Mammary epithelial cell (primary cell): ENCODE measurements at regions of chr19 and their contacts with region 1.

Region 1: DNA sequence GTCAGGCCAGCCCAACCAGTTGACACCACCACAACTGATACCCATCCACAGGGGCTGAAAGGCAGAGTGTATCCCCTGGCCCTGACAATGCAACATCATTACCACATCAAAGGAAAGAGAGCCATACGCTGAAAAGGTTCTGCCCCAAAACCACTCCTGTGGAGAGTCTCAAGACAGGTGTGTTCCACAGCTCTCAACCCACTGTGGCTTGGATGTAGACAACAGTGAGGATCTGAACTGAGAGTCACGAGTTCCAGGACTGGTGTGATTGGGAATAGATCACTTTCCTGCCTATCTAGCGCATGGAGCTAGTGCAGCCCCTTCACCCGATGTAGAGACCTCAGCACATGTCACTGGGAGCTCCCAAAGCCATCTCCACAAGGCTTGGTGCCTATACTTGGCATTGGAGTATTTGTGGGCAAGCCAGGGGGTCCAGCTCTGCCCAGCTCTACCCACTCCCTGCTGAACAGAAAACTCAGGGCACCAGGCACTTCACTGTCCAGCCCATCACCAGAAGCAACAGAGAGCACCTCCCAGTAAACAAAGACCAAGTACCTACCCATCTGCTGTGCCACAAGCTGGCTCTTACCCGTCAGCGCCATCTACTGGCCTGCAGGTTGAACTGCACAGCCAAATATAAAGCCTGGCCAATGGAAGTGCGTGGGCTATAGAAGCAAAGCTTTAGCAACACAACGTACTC is 579.5 kb downstream of the UQCRFS1 start:
- DNase-seq: peak; percentile 46
- H3K4me3 ChIP-seq: no peak overlapping the region
- H3K27ac ChIP-seq: no peak overlapping the region
- H3K4me1 ChIP-seq: no peaks in the 10 kb centered on the region
- H3K27me3 ChIP-seq: no peaks in the 10 kb centered on the region
- CTCF ChIP-seq: peak; percentile 95 to 98

Region 2: DNA sequence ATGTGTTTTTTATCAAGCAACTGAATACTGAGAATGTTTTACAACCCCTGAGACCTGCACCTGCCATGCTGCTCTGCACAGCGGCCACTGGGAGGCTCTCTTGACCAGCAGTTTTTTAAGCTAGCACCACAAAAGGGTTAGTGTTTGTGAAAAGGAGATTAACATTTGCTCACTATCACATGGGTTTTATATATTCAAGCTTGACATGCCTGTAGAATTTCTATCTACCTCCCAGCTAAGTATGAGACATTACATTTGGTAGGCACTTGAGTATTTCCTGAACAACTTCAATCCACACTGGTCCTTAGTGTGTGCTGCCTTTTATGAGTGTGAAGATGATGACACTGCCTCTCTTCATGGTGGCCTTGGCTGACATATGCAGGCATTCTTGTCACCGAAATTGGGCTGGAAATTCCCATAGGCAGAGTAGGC is 659.4 kb before region 1 on chr19:
- CTCF ChIA-PET with region 1: interaction called, 3 read pairs
- dilution Hi-C with region 1: no loop called
- in situ Hi-C with region 1: no loop called
- intact Hi-C with region 1: loop called (anchors 5 kb)
- DNase-seq: no peak
- H3K4me3 ChIP-seq: no peak overlapping the region
- H3K27ac ChIP-seq: no peak overlapping the region
- H3K4me1 ChIP-seq: no peaks in the 10 kb centered on the region
- H3K27me3 ChIP-seq: no peaks in the 10 kb centered on the region
- CTCF ChIP-seq: peak; percentile 49 to 65

Region 3: GRCh38 chr19:28242297-28242927 is 391.1 kb before region 1 on chr19:
- CTCF ChIA-PET with region 1: no interaction called
- dilution Hi-C with region 1: no loop called
- in situ Hi-C with region 1: no loop called
- intact Hi-C with region 1: loop called (anchors 1 kb)
- DNase-seq: peak; percentile 2
- H3K4me3 ChIP-seq: no peak overlapping the region
- H3K27ac ChIP-seq: no peak overlapping the region
- H3K4me1 ChIP-seq: no peaks in the 10 kb centered on the region
- H3K27me3 ChIP-seq: no peaks in the 10 kb centered on the region
- CTCF ChIP-seq: peak; percentile 62 to 78

Region 4: GRCh38 chr19:28324275-28325060 is 309.0 kb before region 1 on chr19:
- CTCF ChIA-PET with region 1: no interaction called
- dilution Hi-C with region 1: no loop called
- in situ Hi-C with region 1: no loop called
- intact Hi-C with region 1: loop called (anchors 1 kb)
- DNase-seq: no peak
- H3K4me3 ChIP-seq: no peak overlapping the region
- H3K27ac ChIP-seq: no peak overlapping the region
- H3K4me1 ChIP-seq: no peaks in the 10 kb centered on the region
- H3K27me3 ChIP-seq: no peaks in the 10 kb centered on the region
- CTCF ChIP-seq: peak in 1 of 2 donors; percentile 4

Region 5: GRCh38 chr19:28466107-28467045 is 167.1 kb before region 1 on chr19:
- CTCF ChIA-PET with region 1: no interaction called
- dilution Hi-C with region 1: no loop called
- in situ Hi-C with region 1: loop called in 1 of 2 experiments (anchors 10 kb)
- intact Hi-C with region 1: loop called (anchors 1 kb)
- DNase-seq: peak; percentile 35
- H3K4me3 ChIP-seq: no peak overlapping the region
- H3K27ac ChIP-seq: no peak overlapping the region
- H3K4me1 ChIP-seq: peaks cover 29% of the 10 kb centered on the region
- H3K27me3 ChIP-seq: no peaks in the 10 kb centered on the region
- CTCF ChIP-seq: peak; percentile 86 to 89

Region 6: GRCh38 chr19:28472843-28473242 is 160.6 kb before region 1 on chr19:
- CTCF ChIA-PET with region 1: no interaction called
- dilution Hi-C with region 1: no loop called
- in situ Hi-C with region 1: loop called in 1 of 2 experiments (anchors 10 kb)
- intact Hi-C with region 1: no loop called
- DNase-seq: no peak
- H3K4me3 ChIP-seq: no peak overlapping the region
- H3K27ac ChIP-seq: no peak overlapping the region
- H3K4me1 ChIP-seq: peaks cover 14% of the 10 kb centered on the region
- H3K27me3 ChIP-seq: no peaks in the 10 kb centered on the region
- CTCF ChIP-seq: no peak

Region 7: GRCh38 chr19:28596561-28597071 is 36.9 kb before region 1 on chr19:
- CTCF ChIA-PET with region 1: no interaction called
- dilution Hi-C with region 1: no loop called
- in situ Hi-C with region 1: no loop called
- intact Hi-C with region 1: no loop called
- DNase-seq: no peak
- H3K4me3 ChIP-seq: no peak overlapping the region
- H3K27ac ChIP-seq: no peak overlapping the region
- H3K4me1 ChIP-seq: no peaks in the 10 kb centered on the region
- H3K27me3 ChIP-seq: no peaks in the 10 kb centered on the region
- CTCF ChIP-seq: no peak

Region 8: DNA sequence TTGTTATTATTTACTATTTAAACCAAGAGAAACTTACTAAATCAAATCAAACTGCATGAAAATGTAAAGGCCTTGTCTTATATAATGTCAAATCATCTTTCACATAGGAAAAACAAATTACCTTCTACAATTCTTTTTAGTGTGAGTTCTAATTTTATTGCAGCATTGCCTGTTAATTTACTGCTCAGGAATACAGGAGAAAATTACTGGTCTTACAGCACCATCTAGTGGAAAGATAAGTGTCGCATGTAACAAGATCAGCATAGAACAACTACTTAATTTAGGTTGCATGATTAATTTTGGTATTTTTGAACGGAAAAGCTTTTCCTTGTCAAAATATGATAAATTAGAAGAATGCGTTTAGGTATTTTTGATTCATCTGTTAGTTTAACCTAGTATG is 76.8 kb after region 1 on chr19:
- CTCF ChIA-PET with region 1: no interaction called
- dilution Hi-C with region 1: no loop called
- in situ Hi-C with region 1: no loop called
- intact Hi-C with region 1: loop called (anchors 5 kb)
- DNase-seq: peak; percentile 52
- H3K4me3 ChIP-seq: no peak overlapping the region
- H3K27ac ChIP-seq: no peak overlapping the region
- H3K4me1 ChIP-seq: peaks cover 7% of the 10 kb centered on the region
- H3K27me3 ChIP-seq: no peaks in the 10 kb centered on the region
- CTCF ChIP-seq: peak; percentile 64 to 73

Region 9: GRCh38 chr19:28764066-28764465 is 130.6 kb after region 1 on chr19:
- CTCF ChIA-PET with region 1: no interaction called
- dilution Hi-C with region 1: no loop called
- in situ Hi-C with region 1: no loop called
- intact Hi-C with region 1: no loop called
- DNase-seq: no peak
- H3K4me3 ChIP-seq: no peak overlapping the region
- H3K27ac ChIP-seq: no peak overlapping the region
- H3K4me1 ChIP-seq: no peaks in the 10 kb centered on the region
- H3K27me3 ChIP-seq: no peaks in the 10 kb centered on the region
- CTCF ChIP-seq: no peak